PC-3 (cell line): ENCODE measurements at regions of chr1 and their contacts with region 1.

Region 1: DNA sequence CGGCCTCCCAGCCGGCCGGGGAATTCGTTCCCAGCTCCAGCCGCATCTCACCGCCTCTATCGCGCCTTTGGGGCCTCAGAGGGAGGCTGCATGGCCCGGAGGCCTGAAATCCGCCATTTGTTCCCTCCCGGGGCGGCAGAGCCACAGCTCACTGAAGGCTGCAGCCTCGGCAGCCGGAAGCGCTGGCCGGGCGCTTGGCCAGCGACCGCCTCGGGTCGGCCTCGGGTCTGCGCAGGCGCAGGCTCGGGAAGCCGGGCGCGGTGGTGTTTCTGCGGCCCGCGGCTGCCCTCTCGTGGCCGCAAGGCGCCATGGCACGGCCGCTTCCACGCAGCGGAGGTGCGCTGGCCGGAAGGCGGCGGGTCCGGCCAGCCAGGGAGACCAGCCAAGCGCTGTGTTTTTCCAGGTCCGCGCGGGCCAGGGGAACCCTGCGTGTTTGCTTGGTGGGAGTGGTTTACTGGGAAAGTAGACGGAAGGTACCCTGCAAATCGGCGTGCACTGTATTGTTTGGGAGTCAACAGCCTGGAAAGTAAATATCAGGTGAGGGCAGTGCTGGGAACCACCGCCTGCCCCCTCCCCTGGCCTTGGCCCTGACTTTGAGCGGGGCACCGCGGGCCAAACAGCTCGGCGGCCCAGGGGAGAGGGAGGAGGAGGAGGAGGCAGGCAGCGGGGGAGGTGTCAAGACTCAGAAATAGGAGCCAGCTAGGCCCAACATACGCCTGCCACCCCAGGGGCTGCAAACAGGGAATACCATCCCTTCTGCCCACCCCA is 52.7 kb upstream of the CD34 start:
- DNase-seq: peak; percentile 96
- ATAC-seq: peak; percentile 90
- H3K4me3 ChIP-seq: peak overlapping the region; percentile 68
- H3K27ac ChIP-seq: no peak overlapping the region
- H3K4me1 ChIP-seq: peaks cover 14% of the 10 kb centered on the region
- H3K27me3 ChIP-seq: no peaks in the 10 kb centered on the region
- CTCF ChIP-seq: peak; percentile 97

Region 2: DNA sequence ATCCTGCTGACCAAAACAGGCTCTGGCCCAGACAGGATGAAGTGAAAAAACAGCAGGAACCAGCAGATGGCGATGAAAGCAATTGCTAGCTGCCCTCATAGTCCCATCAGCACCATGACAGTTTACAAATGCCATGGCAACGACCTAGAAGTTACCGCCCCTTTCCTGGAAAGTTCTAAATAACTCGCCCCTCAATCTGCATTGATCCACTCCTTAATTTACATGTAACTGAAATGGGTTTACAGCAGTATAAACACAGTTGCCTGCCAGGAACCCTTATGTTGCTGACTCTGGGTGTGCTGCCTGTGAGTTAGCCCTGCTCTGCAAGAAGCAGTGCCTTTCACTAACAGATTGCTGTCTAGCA is 384.2 kb before region 1 on chr1:
- CTCF ChIA-PET with region 1: interaction called, 12 read pairs
- POLR2A ChIA-PET with region 1: no interaction called
- intact Hi-C with region 1: no loop called
- DNase-seq: peak; percentile 92
- ATAC-seq: peak; percentile 99
- H3K4me3 ChIP-seq: no peak overlapping the region
- H3K27ac ChIP-seq: no peak overlapping the region
- H3K4me1 ChIP-seq: no peaks in the 10 kb centered on the region
- H3K27me3 ChIP-seq: peaks cover 28% of the 10 kb centered on the region
- CTCF ChIP-seq: peak; percentile 91

Region 3: GRCh38 chr1:207885129-207886032 is 78.2 kb before region 1 on chr1:
- CTCF ChIA-PET with region 1: interaction called, 54 read pairs
- POLR2A ChIA-PET with region 1: no interaction called
- intact Hi-C with region 1: loop called (anchors 1 kb)
- DNase-seq: peak; percentile 90
- ATAC-seq: peak; percentile 99
- H3K4me3 ChIP-seq: no peak overlapping the region
- H3K27ac ChIP-seq: no peak overlapping the region
- H3K4me1 ChIP-seq: peaks cover 10% of the 10 kb centered on the region; the same call in 1 of the 2 replicates
- H3K27me3 ChIP-seq: no peaks in the 10 kb centered on the region
- CTCF ChIP-seq: peak; percentile 98

Region 4: DNA sequence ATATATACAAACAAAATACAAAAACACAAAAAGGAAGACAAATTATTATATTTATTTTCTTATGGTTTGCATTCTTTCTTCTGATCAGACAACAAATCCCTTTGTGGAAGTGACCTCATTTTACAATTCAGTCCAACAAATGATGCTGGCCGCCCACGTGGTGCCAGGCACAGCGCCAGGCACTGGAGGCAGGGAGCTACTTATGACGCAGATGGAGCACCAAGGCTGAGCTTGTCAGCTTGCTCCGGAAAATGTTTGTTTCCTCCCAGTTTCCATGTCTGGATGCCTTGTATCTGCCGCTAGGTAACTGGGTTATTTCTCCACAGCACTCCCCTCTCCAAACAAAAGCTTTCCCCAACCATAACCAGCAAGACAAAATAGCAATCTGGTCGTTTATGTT is 21.9 kb before region 1 on chr1:
- CTCF ChIA-PET with region 1: interaction called, 14 read pairs
- POLR2A ChIA-PET with region 1: interaction called, 3 read pairs
- intact Hi-C with region 1: loop called (anchors 2 kb)
- DNase-seq: no peak
- ATAC-seq: no peak
- H3K4me3 ChIP-seq: no peak overlapping the region
- H3K27ac ChIP-seq: no peak overlapping the region
- H3K4me1 ChIP-seq: peaks cover 20% of the 10 kb centered on the region
- H3K27me3 ChIP-seq: no peaks in the 10 kb centered on the region
- CTCF ChIP-seq: no peak

Region 5: GRCh38 chr1:208227366-208227765 is 263.8 kb after region 1 on chr1:
- CTCF ChIA-PET with region 1: interaction called, 19 read pairs
- POLR2A ChIA-PET with region 1: no interaction called
- intact Hi-C with region 1: no loop called
- DNase-seq: no peak
- ATAC-seq: no peak
- H3K4me3 ChIP-seq: no peak overlapping the region
- H3K27ac ChIP-seq: no peak overlapping the region
- H3K4me1 ChIP-seq: peaks cover 31% of the 10 kb centered on the region
- H3K27me3 ChIP-seq: no peaks in the 10 kb centered on the region
- CTCF ChIP-seq: no peak